ENCODE measurements at regions of chr3 and their contacts with region 1.

Region 1: GRCh38 chr3:153161138-153161713 is 800 bp upstream of the RAP2B start:
- DNase-seq: peak; percentile 99
- ATAC-seq: peak; percentile 82
- H3K4me3 ChIP-seq: peak overlapping the region; percentile 79 to 80
- H3K27ac ChIP-seq: peak overlapping the region; percentile 92
- H3K4me1 ChIP-seq: peaks cover 20 to 46% of the 10 kb centered on the region in 2 experiments
- H3K27me3 ChIP-seq: no peaks in the 10 kb centered on the region
- CTCF ChIP-seq: no peak
- POLR2A ChIP-seq: no peak
- RAD21 ChIP-seq: no peak

Region 2: DNA sequence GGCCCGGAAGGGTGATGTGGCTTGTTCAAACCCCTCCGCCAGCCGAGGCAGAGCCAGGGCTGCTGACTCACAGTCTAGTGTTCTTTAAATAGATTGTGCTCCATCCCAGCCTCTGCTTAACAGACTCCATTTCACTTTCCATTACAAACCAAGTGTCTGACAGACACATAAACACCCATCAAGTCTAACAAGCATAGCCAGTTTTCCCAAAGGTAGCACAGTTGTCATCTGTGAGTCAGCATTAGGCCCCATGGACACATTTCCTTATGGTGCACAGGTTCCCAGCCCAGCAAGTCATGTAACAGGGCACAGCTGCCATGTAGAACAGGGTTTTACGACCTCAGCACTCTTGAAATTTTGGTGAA is 109.1 kb before region 1 on chr3:
- CTCF ChIA-PET with region 1: interaction called, 3 read pairs
- POLR2A ChIA-PET with region 1: interaction called, 23 read pairs
- RAD21 ChIA-PET with region 1: no interaction called
- intact Hi-C with region 1: loop called (anchors 1 kb)
- DNase-seq: peak; percentile 95
- ATAC-seq: peak; percentile 81
- H3K4me3 ChIP-seq: peak overlapping the region; percentile 8 to 28; a peak in 3 of 4 replicates
- H3K27ac ChIP-seq: peak overlapping the region; percentile 77
- H3K4me1 ChIP-seq: peaks cover 22 to 40% of the 10 kb centered on the region in 2 experiments
- H3K27me3 ChIP-seq: no peaks in the 10 kb centered on the region
- CTCF ChIP-seq: no peak
- POLR2A ChIP-seq: no peak
- RAD21 ChIP-seq: peak; percentile 45

Region 3: DNA sequence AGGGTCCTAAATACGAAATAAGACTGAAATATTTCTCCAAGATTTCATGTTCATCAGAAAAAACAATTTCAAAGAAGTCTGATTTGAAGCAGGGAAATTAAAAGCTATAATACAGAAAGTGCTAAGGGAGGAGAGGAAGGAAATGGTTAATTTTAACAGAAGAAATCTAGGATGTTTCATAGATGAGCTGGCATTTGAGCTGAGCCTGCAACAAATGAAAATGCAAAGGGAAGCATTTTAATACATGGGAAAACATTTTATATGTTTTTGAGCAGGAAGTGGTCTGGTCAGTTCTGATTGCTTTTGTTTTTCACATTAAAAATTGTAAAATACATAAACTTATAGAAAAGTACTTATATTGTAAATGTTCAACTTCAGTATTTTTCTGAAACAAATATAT is 16.4 kb before region 1 on chr3:
- CTCF ChIA-PET with region 1: interaction called, 4 read pairs
- POLR2A ChIA-PET with region 1: interaction called, 37 read pairs
- RAD21 ChIA-PET with region 1: no interaction called
- intact Hi-C with region 1: loop called (anchors 2 kb)
- DNase-seq: no peak
- ATAC-seq: no peak
- H3K4me3 ChIP-seq: no peak overlapping the region
- H3K27ac ChIP-seq: no peak overlapping the region
- H3K4me1 ChIP-seq: peaks cover 13 to 39% of the 10 kb centered on the region in 2 experiments
- H3K27me3 ChIP-seq: no peaks in the 10 kb centered on the region
- CTCF ChIP-seq: no peak
- POLR2A ChIP-seq: no peak
- RAD21 ChIP-seq: no peak

Region 4: GRCh38 chr3:153291056-153291685 is 129.9 kb after region 1 on chr3:
- CTCF ChIA-PET with region 1: interaction called, 3 read pairs
- POLR2A ChIA-PET with region 1: no interaction called
- RAD21 ChIA-PET with region 1: no interaction called
- intact Hi-C with region 1: loop called (anchors 5 kb)
- DNase-seq: peak; percentile 44
- ATAC-seq: peak; percentile 98
- H3K4me3 ChIP-seq: no peak overlapping the region
- H3K27ac ChIP-seq: no peak overlapping the region
- H3K4me1 ChIP-seq: peaks cover 0 to 13% of the 10 kb centered on the region in 2 experiments; a peak in 2 of 4 replicates
- H3K27me3 ChIP-seq: no peaks in the 10 kb centered on the region
- CTCF ChIP-seq: peak; percentile 55 to 75 (median 57); a peak in 5 of 6 replicates
- POLR2A ChIP-seq: no peak
- RAD21 ChIP-seq: peak; percentile 71

Region 5: GRCh38 chr3:153768561-153769469 is 607.6 kb after region 1 on chr3:
- CTCF ChIA-PET with region 1: no interaction called
- POLR2A ChIA-PET with region 1: no interaction called
- RAD21 ChIA-PET with region 1: no interaction called
- intact Hi-C with region 1: loop called (anchors 10 kb)
- DNase-seq: peak; percentile 47
- ATAC-seq: peak; percentile 97
- H3K4me3 ChIP-seq: no peak overlapping the region
- H3K27ac ChIP-seq: no peak overlapping the region
- H3K4me1 ChIP-seq: no peaks in the 10 kb centered on the region
- H3K27me3 ChIP-seq: no peaks in the 10 kb centered on the region
- CTCF ChIP-seq: peak; percentile 46 to 84 (median 79); a peak in 5 of 6 replicates
- POLR2A ChIP-seq: no peak
- RAD21 ChIP-seq: peak; percentile 84

Measured in HCT116 (cell line).